Sigmoid colon (tissue), 7 donors: ENCODE measurements at regions of chr3 and their contacts with region 1.

Region 1: GRCh38 chr3:64224826-64225610 is at the start of gene PRICKLE2:
- DNase-seq: peak; percentile 90
- H3K4me3 ChIP-seq: peak within 1 kb of the TSS; percentile 5 to 38 (median 36)
- H3K27ac ChIP-seq: peak within 1 kb of the TSS; percentile 75 to 90 (median 87)
- H3K4me1 ChIP-seq: peaks cover 0 to 89% (median 82%) of the 10 kb centered on the region in 4 donors
- H3K27me3 ChIP-seq: no peaks in the 10 kb centered on the region
- CTCF ChIP-seq: peak in 3 of 4 experiments; percentile 17 to 25 (median 17)
- EP300 ChIP-seq: no peak
- POLR2A ChIP-seq: peak in 1 of 2 donors; percentile 4
- total RNA-seq, gene PRICKLE2: 61.1 to 96.7 (median 69.9) TPM

Region 2: GRCh38 chr3:64030741-64031140 is 194.3 kb before region 1 on chr3:
- intact Hi-C with region 1: loop called (anchors 5 kb)
- DNase-seq: peak; percentile 82
- H3K4me3 ChIP-seq: peak overlapping the region in 3 of 4 donors; percentile 15 to 39 (median 33)
- H3K27ac ChIP-seq: peak overlapping the region in 2 of 4 donors; percentile 38 to 51
- H3K4me1 ChIP-seq: peaks cover 0 to 30% (median 12%) of the 10 kb centered on the region in 4 donors
- H3K27me3 ChIP-seq: no peaks in the 10 kb centered on the region
- CTCF ChIP-seq: peak; percentile 87 to 97 (median 88)
- EP300 ChIP-seq: no peak
- POLR2A ChIP-seq: no peak

Region 3: GRCh38 chr3:64150623-64151207 is 74.3 kb before region 1 on chr3:
- intact Hi-C with region 1: loop called (anchors 5 kb)
- DNase-seq: peak; percentile 92
- H3K4me3 ChIP-seq: no peak overlapping the region
- H3K27ac ChIP-seq: peak overlapping the region; percentile 84 to 96 (median 87)
- H3K4me1 ChIP-seq: peaks cover 0 to 60% (median 46%) of the 10 kb centered on the region in 4 donors
- H3K27me3 ChIP-seq: no peaks in the 10 kb centered on the region
- CTCF ChIP-seq: no peak
- EP300 ChIP-seq: peak; percentile 55 to 91 (median 75)
- POLR2A ChIP-seq: no peak

Region 4: GRCh38 chr3:64187065-64187959 is 37.7 kb before region 1 on chr3:
- intact Hi-C with region 1: loop called (anchors 5 kb)
- DNase-seq: peak; percentile 94
- H3K4me3 ChIP-seq: no peak overlapping the region
- H3K27ac ChIP-seq: peak overlapping the region; percentile 80 to 87 (median 85)
- H3K4me1 ChIP-seq: peaks cover 0 to 98% (median 85%) of the 10 kb centered on the region in 4 donors
- H3K27me3 ChIP-seq: no peaks in the 10 kb centered on the region
- CTCF ChIP-seq: peak in 1 of 4 experiments; percentile 14
- EP300 ChIP-seq: peak in 2 of 4 donors; percentile 68 to 89
- POLR2A ChIP-seq: no peak

Region 5: DNA sequence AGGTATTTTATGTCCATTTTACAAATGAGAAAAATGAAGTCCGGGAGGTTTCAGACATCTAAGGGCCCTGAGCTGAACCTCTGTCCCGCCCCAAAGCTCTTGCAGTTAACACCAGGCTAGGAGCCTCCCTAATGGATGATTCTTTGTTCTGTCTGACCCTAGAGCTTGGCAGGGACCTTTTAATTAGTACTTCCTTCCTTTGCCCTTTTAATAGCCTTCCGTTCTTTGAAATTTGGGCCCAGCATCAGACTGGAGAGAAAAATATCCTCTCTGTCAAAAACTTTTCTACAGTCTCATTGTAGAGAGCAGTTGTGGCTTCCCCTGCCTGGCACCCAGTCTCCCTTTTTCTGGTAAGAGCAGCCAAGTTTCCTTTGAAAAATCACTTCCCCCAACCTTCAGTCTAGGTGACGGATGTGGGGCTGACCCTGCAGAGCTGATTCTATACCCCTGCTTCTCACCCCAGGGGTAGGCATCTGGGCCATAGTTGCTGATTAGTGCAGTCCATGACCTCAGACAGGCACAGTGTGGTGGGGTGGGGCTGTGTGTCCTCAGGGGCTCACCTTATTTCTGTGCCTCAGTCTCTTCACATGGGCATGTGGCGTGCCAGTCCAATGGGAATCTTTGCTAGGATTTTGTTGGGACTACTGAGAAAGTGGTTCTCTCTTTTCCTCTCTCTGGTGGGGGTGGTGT is 242.4 kb after region 1 on chr3:
- intact Hi-C with region 1: no loop called
- DNase-seq: no peak
- H3K4me3 ChIP-seq: no peak overlapping the region
- H3K27ac ChIP-seq: no peak overlapping the region
- H3K4me1 ChIP-seq: no peaks in the 10 kb centered on the region
- H3K27me3 ChIP-seq: peaks cover 0 to 12% (median 0%) of the 10 kb centered on the region in 3 donors
- CTCF ChIP-seq: no peak
- EP300 ChIP-seq: no peak
- POLR2A ChIP-seq: no peak